Thyroid gland (tissue), 4 donors: ENCODE measurements at regions of chr1 and their contacts with region 1.

Region 1: GRCh38 chr1:64823691-64824476 is 79.0 kb downstream of the RAVER2 start:
- DNase-seq: peak; percentile 67 to 72
- H3K4me3 ChIP-seq: no peak overlapping the region
- H3K27ac ChIP-seq: no peak overlapping the region
- H3K4me1 ChIP-seq: no peaks in the 10 kb centered on the region
- H3K27me3 ChIP-seq: no peaks in the 10 kb centered on the region
- CTCF ChIP-seq: peak; percentile 73 to 94 (median 79)
- POLR2A ChIP-seq: no peak

Region 2: DNA sequence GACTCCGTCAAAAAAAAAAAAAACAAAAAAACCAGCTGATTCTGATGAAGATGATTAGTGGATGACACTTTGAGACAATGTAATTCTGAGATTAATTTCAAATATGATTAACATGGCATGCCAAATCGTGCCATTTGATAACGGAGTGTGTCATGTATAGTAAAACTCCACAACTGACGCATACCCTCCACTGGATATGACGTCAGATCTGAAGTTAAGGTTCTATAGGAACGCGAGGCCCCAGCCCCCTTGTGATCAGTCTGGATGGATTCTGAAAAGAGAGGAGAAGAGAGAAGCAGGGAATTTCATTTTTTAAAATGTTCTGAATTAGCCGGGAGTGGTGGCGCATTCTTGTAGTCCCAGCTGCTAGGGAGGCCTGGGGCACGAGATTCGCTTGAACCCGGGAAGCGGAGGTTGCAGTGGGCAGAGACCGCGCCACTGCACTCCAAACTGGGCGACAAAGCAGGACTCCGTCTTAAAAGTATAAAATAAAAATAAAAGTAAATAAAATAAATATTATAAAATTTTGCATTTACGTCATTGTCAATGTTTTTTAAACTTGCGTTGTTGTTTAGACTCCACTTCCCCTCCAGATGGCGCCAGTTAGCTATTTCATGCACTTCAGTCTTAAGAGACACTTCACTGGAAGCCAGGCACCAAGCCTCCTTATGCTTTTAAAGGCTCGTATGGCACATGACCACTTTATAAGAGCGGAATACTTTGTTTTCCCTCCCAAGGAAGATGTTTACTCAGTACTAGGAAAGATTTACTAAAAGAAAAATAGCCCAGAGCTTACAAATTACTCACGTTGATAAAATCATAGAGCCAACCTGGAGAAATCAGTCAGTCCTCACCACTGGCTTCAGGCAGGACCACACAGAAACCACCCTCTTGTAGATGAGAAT is 555.0 kb before region 1 on chr1:
- intact Hi-C with region 1: loop called (anchors 2 kb)
- DNase-seq: peak; percentile 71 to 80
- H3K4me3 ChIP-seq: no peak overlapping the region
- H3K27ac ChIP-seq: no peak overlapping the region
- H3K4me1 ChIP-seq: peaks cover 0 to 5% of the 10 kb centered on the region in 2 donors
- H3K27me3 ChIP-seq: no peaks in the 10 kb centered on the region
- CTCF ChIP-seq: peak; percentile 32 to 87 (median 72)
- POLR2A ChIP-seq: no peak

Region 3: GRCh38 chr1:64686828-64687724 is 136.8 kb before region 1 on chr1:
- intact Hi-C with region 1: loop called (anchors 5 kb)
- DNase-seq: peak; percentile 23 to 26
- H3K4me3 ChIP-seq: no peak overlapping the region
- H3K27ac ChIP-seq: no peak overlapping the region
- H3K4me1 ChIP-seq: no peaks in the 10 kb centered on the region
- H3K27me3 ChIP-seq: no peaks in the 10 kb centered on the region
- CTCF ChIP-seq: peak; percentile 60 to 83 (median 74)
- POLR2A ChIP-seq: no peak